Mammary epithelial cell (primary cell): ENCODE measurements at regions of chr19 and their contacts with region 1.

Region 1: DNA sequence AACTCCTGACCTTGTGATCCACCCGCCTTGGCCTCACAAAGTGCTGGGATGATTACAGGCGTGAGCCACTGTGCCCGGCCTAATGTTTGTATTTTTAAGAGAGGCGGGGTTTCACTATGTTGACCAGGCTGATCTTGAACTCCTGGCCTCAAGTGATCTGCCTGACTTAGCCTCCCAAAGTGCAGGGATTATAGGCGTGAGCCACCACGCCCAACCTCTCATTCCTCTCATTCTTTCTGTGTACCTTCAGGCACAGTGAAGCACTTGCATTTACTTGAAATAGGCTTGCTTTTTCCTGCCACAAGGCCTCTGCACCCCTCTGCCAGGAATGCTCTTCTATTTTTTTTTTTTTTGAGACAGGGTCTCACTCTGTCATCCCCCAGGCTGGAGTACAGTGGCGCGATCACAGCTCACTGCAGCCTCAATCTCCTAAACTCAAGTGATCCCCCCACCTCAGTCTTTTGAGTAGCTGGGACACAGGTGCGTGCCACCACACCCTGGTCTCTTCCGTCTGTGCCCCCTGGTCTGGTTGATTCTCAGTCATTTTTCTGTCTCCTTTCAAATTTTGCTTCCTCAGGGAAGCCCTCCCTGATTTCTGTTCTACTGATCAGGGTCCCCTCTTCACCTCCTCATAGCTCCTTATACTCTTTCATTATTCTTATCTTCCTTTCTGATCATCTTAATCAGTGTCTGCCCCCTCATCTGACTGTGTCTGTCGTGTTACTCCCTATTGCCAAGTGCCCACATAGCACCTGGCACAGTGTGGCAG is 15.1 kb downstream of the ACTMAP start:
- DNase-seq: no peak
- H3K4me3 ChIP-seq: no peak overlapping the region
- H3K27ac ChIP-seq: no peak overlapping the region
- H3K4me1 ChIP-seq: no peaks in the 10 kb centered on the region
- H3K27me3 ChIP-seq: no peaks in the 10 kb centered on the region
- CTCF ChIP-seq: no peak

Region 2: GRCh38 chr19:40721936-40722661 is 13.1 kb before region 1 on chr19:
- CTCF ChIA-PET with region 1: no interaction called
- dilution Hi-C with region 1: no loop called
- in situ Hi-C with region 1: no loop called
- intact Hi-C with region 1: loop called (anchors 2 kb)
- DNase-seq: peak; percentile 89
- H3K4me3 ChIP-seq: peak overlapping the region; percentile 1 to 37 (median 27)
- H3K27ac ChIP-seq: peak overlapping the region; percentile 93
- H3K4me1 ChIP-seq: peaks cover 25% of the 10 kb centered on the region
- H3K27me3 ChIP-seq: no peaks in the 10 kb centered on the region
- CTCF ChIP-seq: no peak